ENCODE measurements at regions of chrX and their contacts with region 1.

Region 1: DNA sequence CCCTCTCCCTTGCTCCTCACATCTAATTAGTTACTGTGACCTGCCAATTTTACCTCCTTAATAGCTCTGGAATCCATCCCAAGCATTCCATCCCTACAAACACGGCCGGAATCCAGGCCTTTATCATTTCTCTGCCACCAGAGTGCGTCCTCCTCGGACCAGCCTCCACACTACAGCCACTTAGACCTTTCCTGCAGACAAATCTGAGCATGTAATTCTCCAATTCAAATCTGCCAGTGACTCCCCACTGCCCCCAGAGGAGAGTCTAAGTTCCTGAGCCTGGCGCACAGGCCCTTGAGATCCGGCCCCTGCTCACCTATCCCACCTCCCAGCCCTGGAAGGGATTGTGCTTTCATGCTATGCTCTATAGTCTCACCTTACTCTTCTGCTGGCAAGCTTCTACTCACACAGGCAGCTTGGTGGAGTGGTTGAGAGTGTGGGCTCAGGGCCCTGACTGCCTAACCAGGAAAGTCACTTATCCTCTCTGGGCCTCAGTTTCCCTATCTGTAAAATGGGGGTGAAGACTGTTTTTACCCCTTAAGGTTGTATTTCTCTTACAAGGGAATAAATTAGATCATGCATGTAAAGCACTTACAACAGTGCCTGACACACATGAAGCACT is 31.2 kb downstream of the PJA1 start:
- DNase-seq: peak; percentile 61
- H3K4me3 ChIP-seq: no peak overlapping the region
- H3K27ac ChIP-seq: no peak overlapping the region
- H3K4me1 ChIP-seq: no peaks in the 10 kb centered on the region
- H3K27me3 ChIP-seq: no peaks in the 10 kb centered on the region
- CTCF ChIP-seq: peak; percentile 58 to 71

Region 2: GRCh38 chrX:69165087-69165651 is 31.1 kb after region 1 on chrX and contains the start of gene PJA1:
- CTCF ChIA-PET with region 1: no interaction called
- dilution Hi-C with region 1: no loop called
- in situ Hi-C with region 1: no loop called
- intact Hi-C with region 1: loop called (anchors 2 kb)
- DNase-seq: peak; percentile 54
- H3K4me3 ChIP-seq: peak within 1 kb of the TSS; percentile 69 to 85 (median 79)
- H3K27ac ChIP-seq: peak within 1 kb of the TSS; percentile 54
- H3K4me1 ChIP-seq: peaks cover 7% of the 10 kb centered on the region
- H3K27me3 ChIP-seq: no peaks in the 10 kb centered on the region
- CTCF ChIP-seq: no peak
- total RNA-seq, gene PJA1: 21.2 to 32.9 TPM

Region 3: DNA sequence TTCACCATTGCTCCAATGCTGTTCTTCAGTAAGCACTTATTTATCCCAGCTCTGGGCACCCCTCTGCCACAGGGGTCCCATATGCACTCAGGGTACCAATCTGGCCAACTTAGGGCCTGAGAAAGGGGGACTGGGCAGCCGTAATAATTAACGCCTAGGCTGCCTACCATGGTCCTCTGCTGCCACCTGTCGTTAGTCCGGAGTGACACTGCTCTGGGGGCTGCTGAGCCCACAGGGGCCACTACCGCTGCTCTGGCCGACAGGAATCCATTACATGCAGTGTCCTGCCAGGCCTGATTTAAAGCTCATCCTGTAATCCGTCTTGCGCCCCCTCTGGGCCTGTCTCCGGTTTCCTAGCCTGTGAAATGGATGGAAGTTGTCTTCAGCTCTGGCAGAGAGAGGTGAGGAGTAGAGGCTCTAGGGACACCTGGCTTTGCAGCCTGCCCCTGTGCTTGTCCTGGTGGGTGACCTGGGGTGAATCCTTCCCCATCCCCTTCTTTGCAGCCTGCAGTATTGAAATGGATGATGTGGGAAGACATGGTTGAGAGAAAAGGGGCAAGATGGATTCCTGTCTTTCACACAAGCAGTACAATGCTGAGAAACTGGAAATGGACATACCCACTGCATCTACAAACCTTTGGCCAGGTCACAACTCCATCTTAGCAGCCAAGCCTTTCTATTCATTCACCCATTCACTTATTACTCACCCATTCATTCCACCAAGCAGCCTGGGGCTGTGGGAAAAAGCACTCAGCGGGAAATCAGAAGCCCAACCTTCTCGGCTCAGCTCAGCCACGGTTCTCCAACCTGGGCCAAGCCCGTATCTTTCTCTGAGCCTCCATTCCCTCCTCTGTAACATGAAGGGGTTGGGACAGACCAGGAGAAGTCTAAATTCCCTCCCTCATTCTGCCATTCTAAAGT is 253.8 kb after region 1 on chrX:
- CTCF ChIA-PET with region 1: no interaction called
- dilution Hi-C with region 1: no loop called
- in situ Hi-C with region 1: no loop called
- intact Hi-C with region 1: no loop called
- DNase-seq: peak; percentile 8
- H3K4me3 ChIP-seq: no peak overlapping the region
- H3K27ac ChIP-seq: no peak overlapping the region
- H3K4me1 ChIP-seq: peaks cover 9% of the 10 kb centered on the region
- H3K27me3 ChIP-seq: no peaks in the 10 kb centered on the region
- CTCF ChIP-seq: peak; percentile 64 to 85

Measured in mammary epithelial cell (primary cell).